Activated T-helper 2 cell treated with anti-CD3 and anti-CD28 coated beads, Interferon-gamma antibody, Interleukin-2, Interleukin-4, amounts not matched to agents 10 μg/mL and 5 μg/mL and 100 μg/mL, durations not matched to agents 14 hours and 24 hours and 36 hours (primary cell): ENCODE measurements at regions of chr5 and their contacts with region 1.

Region 1: DNA sequence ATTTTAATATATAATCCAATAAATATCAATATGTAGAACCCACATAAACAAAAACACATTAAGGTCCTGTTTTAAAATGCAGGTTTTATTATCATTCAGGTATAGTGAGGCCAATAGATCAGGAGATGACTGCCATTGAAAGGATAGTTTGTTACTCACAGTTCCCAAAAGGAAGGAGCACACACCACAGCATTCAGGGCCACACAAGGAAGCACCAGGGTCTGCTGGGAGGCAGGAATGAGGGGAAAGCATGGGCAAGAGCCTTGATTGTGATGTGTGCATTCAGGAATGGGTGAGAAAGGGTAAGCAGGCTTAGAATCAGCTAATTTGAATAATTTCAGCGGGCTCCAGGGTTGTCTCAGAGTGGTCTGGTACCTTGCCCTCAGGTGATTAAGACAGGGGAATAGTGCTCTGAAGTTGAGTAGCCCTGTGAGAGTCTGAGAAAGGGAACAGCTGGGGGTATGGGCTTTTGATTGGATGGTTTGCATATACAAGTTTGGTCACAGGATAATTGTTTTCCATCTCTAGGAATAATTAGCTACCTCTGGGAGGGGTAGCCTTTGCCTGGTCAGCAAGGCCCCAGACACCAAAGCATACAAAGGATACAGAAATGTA is 19.8 kb upstream of the OTULIN start:
- DNase-seq: no peak
- H3K4me3 Mint-ChIP-seq: no peak overlapping the region
- H3K27ac Mint-ChIP-seq: no peak overlapping the region
- H3K4me1 Mint-ChIP-seq: peaks cover 5% of the 10 kb centered on the region
- H3K27me3 Mint-ChIP-seq: peaks cover 19% of the 10 kb centered on the region

Region 2: GRCh38 chr5:13987843-13988464 is 656.8 kb before region 1 on chr5:
- intact Hi-C with region 1: loop called (anchors 5 kb)
- DNase-seq: no peak
- H3K4me3 Mint-ChIP-seq: no peak overlapping the region
- H3K27ac Mint-ChIP-seq: no peak overlapping the region
- H3K4me1 Mint-ChIP-seq: no peaks in the 10 kb centered on the region
- H3K27me3 Mint-ChIP-seq: no peaks in the 10 kb centered on the region

Region 3: GRCh38 chr5:14351845-14352712 is 292.7 kb before region 1 on chr5:
- intact Hi-C with region 1: loop called (anchors 1 kb)
- DNase-seq: peak; percentile 33
- H3K4me3 Mint-ChIP-seq: no peak overlapping the region
- H3K27ac Mint-ChIP-seq: no peak overlapping the region
- H3K4me1 Mint-ChIP-seq: no peaks in the 10 kb centered on the region
- H3K27me3 Mint-ChIP-seq: peaks cover 6% of the 10 kb centered on the region

Region 4: GRCh38 chr5:14364576-14365472 is 279.9 kb before region 1 on chr5:
- intact Hi-C with region 1: loop called (anchors 1 kb)
- DNase-seq: no peak
- H3K4me3 Mint-ChIP-seq: no peak overlapping the region
- H3K27ac Mint-ChIP-seq: no peak overlapping the region
- H3K4me1 Mint-ChIP-seq: peaks cover 48% of the 10 kb centered on the region
- H3K27me3 Mint-ChIP-seq: peaks cover 2% of the 10 kb centered on the region

Region 5: DNA sequence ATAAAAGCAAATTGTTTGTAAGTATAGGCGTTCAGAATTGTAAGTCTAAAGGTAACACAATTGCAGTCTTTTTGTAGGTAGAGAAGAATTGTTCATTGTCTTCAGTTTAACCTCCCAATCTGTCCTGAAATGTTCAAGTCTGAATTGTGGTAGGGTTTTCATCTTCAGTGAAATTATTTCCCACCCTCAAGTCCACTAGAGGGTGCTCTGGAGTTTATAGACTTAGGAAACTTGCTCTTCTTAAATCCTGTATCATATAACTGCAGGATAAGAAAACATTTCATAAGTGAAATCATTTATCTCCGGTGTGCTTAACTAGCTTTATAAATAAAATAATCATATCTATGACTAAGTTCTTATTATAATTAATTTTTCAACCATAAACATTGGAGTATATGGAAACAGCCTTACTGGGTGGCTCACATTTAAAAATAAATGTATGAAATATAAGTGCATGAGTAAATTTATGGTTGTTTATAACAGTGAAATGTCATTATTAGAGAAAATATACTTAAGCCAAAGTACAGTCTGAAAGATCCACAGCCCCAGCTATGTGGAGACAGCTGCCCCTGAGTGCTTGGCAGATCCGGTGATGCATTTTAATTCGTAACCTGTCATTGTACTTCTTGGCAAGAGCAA is 245.6 kb before region 1 on chr5:
- intact Hi-C with region 1: loop called (anchors 1 kb)
- DNase-seq: no peak
- H3K4me3 Mint-ChIP-seq: no peak overlapping the region
- H3K27ac Mint-ChIP-seq: no peak overlapping the region
- H3K4me1 Mint-ChIP-seq: peaks cover 38% of the 10 kb centered on the region
- H3K27me3 Mint-ChIP-seq: peaks cover 2% of the 10 kb centered on the region

Region 6: GRCh38 chr5:14663734-14664301 is 19.1 kb after region 1 on chr5:
- intact Hi-C with region 1: no loop called
- DNase-seq: peak; percentile 21
- H3K4me3 Mint-ChIP-seq: peak overlapping the region; percentile 96
- H3K27ac Mint-ChIP-seq: peak overlapping the region; percentile 98
- H3K4me1 Mint-ChIP-seq: peaks cover 54% of the 10 kb centered on the region
- H3K27me3 Mint-ChIP-seq: no peaks in the 10 kb centered on the region